MCF 10A (cell line): ENCODE measurements at regions of chr1 and their contacts with region 1.

Region 1: GRCh38 chr1:42282024-42282579 is 52.9 kb downstream of the FOXJ3 start:
- DNase-seq: peak; percentile 57
- H3K4me3 Mint-ChIP-seq: no peak overlapping the region
- H3K27ac Mint-ChIP-seq: peak overlapping the region; percentile 6
- H3K4me1 Mint-ChIP-seq: peaks cover 28% of the 10 kb centered on the region
- H3K27me3 Mint-ChIP-seq: no peaks in the 10 kb centered on the region
- CTCF ChIP-seq: no peak

Region 2: DNA sequence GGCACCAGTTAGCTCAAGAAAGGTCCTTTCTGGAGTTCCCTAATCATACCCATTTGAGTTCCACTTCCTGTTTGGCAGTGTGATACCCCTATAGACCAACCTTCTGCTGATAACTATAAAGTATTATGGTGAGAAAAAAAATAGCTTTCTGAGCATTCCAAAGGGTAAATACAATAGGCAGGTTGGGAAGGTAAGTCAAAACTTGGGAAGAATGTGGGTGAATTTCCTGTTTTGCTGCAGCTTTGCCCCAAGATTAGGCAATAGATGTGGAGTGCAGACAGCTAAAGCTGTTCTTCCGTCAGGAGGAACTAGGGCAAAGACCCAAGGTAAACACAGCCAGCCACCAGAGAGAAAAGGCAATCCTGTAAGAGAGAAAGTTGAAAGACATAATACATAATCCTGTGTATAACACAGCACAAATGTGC is 67.6 kb before region 1 on chr1:
- CTCF ChIA-PET with region 1: no interaction called
- POLR2A ChIA-PET with region 1: no interaction called
- intact Hi-C with region 1: loop called (anchors 5 kb)
- DNase-seq: peak; percentile 90
- H3K4me3 Mint-ChIP-seq: peak overlapping the region; percentile 28
- H3K27ac Mint-ChIP-seq: peak overlapping the region; percentile 20
- H3K4me1 Mint-ChIP-seq: peaks cover 33% of the 10 kb centered on the region
- H3K27me3 Mint-ChIP-seq: no peaks in the 10 kb centered on the region
- CTCF ChIP-seq: no peak